Cardiac septum (tissue), 1 donor: ENCODE measurements at regions of chr10 and their contacts with region 1.

Region 1: GRCh38 chr10:101897633-101898032 is 54.0 kb upstream of the KCNIP2 start:
- DNase-seq: no peak

Region 2: DNA sequence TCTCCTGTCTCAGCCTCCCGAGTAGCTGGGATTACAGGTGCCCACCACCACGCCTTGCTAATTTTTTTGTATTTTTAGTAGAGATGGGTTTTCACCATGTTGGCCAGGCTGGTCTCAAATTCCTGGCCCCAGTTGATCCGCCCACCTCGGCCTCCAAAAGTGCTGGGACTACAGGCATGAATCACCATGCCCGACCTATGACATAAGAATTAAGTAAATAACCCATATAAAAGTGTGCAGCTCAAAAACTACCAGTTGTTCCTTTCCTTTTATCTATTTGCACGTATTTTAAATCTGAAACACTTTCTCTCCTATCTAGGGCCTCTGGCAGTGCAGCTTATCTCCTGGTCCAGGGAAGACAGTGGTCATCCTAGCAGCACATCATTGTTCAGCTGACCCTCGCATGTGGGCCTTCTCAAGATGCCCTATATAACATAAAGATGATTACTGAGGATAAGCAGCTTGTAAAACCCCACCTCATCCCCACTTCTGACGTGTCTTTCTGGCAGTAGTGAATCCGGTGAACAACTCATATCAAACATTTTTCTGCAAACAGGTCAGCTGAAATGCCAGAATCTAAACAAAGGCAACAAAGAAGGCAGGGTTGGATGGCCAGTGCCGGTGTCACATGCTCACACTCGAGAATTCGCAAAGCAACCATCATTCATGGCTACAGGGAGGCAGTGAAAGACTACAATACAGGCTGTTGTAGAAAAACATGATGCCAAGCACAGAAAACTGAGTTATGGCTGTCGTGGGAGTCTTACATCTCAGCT is 18.0 kb before region 1 on chr10:
- intact Hi-C with region 1: no loop called
- DNase-seq: no peak

Region 3: DNA sequence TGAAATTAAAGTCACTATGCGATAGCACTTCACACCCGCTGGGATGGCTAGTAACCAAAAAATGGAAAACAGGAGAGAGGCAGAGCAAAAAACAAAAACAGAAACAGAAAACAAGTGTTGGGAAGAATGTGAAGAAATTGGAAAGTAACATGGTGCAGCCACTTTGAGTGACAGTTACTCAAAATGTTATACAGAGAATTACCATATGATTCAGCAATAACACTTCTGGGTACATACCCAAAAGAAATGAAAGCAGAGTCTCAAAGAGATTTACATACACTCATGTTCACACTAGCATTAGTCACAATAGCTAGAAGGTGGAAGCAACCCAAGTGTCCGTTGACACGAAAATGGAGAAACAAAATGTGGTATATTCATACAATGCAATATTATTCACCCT is 34.5 kb after region 1 on chr10:
- intact Hi-C with region 1: loop called (anchors 5 kb)
- DNase-seq: no peak

Region 4: GRCh38 chr10:101967713-101968112 is 70.1 kb after region 1 on chr10:
- intact Hi-C with region 1: loop called (anchors 2 kb)
- DNase-seq: no peak